ENCODE measurements at regions of chr1 and their contacts with region 1.

Region 1: DNA sequence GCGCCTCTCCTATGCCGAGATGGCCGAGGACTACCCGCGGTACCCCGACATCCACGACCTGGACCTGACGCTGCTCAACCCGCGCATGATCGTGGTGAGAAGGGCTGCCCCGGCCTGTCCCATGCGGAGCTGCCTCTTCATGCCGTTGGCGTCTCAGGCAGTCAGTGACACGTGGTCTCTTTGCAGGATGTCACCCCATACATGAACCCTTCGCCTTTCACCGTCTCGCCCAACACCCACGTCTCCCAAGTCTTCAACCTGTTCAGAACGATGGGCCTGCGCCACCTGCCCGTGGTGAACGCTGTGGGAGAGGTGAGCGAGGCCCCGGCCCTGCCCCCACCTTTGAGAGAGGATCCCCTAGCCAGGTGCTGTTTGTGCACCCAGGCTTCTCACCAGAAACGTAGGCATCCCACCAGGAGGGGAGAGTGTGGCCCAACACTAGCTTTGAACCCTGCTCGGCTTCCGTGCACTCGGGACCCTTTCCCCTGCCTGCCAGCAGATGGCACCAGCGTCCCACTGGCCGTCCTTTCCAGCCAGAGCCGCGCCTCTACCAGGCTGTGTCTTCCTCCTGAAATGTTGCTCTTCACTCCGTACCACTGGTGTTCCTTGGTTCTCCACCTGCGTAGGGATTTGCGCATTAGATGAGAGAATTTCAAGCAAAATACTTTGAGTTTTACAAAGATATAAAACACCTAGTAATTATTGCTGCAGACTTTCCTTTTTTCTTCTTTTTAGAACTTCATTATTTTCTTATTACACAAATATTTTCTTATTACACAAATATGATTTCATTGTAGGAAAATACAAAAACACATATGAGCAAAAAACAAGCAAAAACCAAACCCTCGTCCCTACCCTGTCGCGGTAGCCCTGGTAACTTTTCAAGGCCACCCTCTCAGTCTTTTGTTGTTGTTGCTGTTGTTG is 9.0 kb downstream of the NPPA start:
- DNase-seq: peak; percentile 93
- H3K4me3 ChIP-seq: peak overlapping the region in 1 of 2 experiments; percentile 36; a peak in 1 of 4 replicates
- H3K27ac ChIP-seq: no peak overlapping the region; a peak in 1 of 4 replicates
- H3K4me1 ChIP-seq: peaks cover 0 to 26% of the 10 kb centered on the region in 2 experiments; a peak in 2 of 4 replicates
- H3K27me3 ChIP-seq: no peaks in the 10 kb centered on the region
- CTCF ChIP-seq: peak; percentile 97
- EP300 ChIP-seq: no peak
- RAD21 ChIP-seq: peak; percentile 99

Region 2: DNA sequence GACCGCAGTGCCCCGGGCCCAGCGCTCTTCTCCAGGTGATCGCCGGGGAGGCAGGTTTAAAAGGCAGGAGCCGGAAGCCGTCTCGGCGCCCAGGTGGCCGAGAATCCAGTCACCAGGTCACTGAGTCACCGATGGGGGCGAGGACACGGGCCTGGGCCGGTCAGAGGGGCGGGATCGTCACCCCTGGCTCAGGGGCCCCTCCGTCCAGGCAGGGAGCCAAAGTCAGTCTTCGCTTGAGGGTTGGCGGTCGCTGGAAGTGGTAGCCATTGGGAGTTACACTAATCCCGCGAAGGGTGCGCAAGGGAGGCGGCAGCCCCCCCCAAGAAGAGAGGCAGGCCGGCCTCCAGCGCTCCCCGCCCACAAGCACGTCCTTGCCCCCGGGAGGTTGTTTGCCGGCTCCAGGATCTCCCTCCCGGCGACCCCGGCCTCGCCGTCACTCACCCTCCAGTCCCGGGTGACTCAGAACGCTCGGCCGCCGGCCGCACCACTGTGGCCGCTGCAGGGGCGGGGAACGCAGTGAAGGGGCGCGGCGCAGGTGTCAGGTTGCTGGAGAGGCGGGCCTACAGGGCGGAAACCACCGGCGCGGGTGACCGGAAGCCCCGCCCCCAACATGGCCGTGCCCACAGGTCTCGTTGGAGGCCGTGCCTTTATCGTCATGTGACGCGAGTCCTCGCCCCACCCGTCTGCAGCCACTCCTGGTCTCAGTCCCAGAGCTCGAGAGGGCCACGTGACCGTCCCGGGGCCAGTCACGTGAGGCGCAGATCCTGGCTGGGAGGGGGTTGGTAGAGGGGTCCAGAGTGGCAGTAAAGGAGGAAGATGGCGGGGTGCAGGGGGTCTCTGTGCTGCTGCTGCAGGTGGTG is 32.9 kb before region 1 on chr1 and contains the starts of genes CLCN6 and MTHFR:
- CTCF ChIA-PET with region 1: interaction called, 10 read pairs
- POLR2A ChIA-PET with region 1: no interaction called
- DNase-seq: peak; percentile 99
- H3K4me3 ChIP-seq: peak within 1 kb of the TSS; percentile 87 to 96
- H3K27ac ChIP-seq: peak within 1 kb of the TSS; percentile 79 to 91
- H3K4me1 ChIP-seq: peaks cover 34 to 35% of the 10 kb centered on the region in 2 experiments; a peak in 3 of 4 replicates
- H3K27me3 ChIP-seq: no peaks in the 10 kb centered on the region
- CTCF ChIP-seq: no peak
- EP300 ChIP-seq: no peak
- RAD21 ChIP-seq: no peak
- polyA plus RNA-seq, gene CLCN6: 7.4 and 8.3 TPM in 2 replicates
- polyA plus RNA-seq, gene MTHFR: 5.3 and 7.6 TPM in 2 replicates

Region 3: GRCh38 chr1:11828511-11828910 is 10.1 kb before region 1 on chr1:
- CTCF ChIA-PET with region 1: interaction called, 29 read pairs
- POLR2A ChIA-PET with region 1: no interaction called
- DNase-seq: no peak
- H3K4me3 ChIP-seq: no peak overlapping the region
- H3K27ac ChIP-seq: no peak overlapping the region
- H3K4me1 ChIP-seq: no peaks in the 10 kb centered on the region
- H3K27me3 ChIP-seq: no peaks in the 10 kb centered on the region
- CTCF ChIP-seq: no peak
- EP300 ChIP-seq: no peak
- RAD21 ChIP-seq: no peak

Region 4: GRCh38 chr1:11882814-11883538 is 44.4 kb after region 1 on chr1:
- CTCF ChIA-PET with region 1: interaction called, 48 read pairs
- POLR2A ChIA-PET with region 1: interaction called, 4 read pairs
- DNase-seq: peak; percentile 78
- H3K4me3 ChIP-seq: no peak overlapping the region
- H3K27ac ChIP-seq: peak overlapping the region in 1 of 2 experiments; percentile 99; a peak in 2 of 4 replicates
- H3K4me1 ChIP-seq: peaks cover 0 to 57% of the 10 kb centered on the region in 2 experiments; a peak in 2 of 4 replicates
- H3K27me3 ChIP-seq: no peaks in the 10 kb centered on the region
- CTCF ChIP-seq: no peak
- EP300 ChIP-seq: peak in 1 of 2 experiments; percentile 51; a peak in 2 of 4 replicates
- RAD21 ChIP-seq: no peak

Region 5: GRCh38 chr1:11967028-11967547 is 128.5 kb after region 1 on chr1:
- CTCF ChIA-PET with region 1: interaction called, 14 read pairs
- POLR2A ChIA-PET with region 1: no interaction called
- DNase-seq: peak; percentile 69
- H3K4me3 ChIP-seq: no peak overlapping the region
- H3K27ac ChIP-seq: no peak overlapping the region
- H3K4me1 ChIP-seq: no peaks in the 10 kb centered on the region
- H3K27me3 ChIP-seq: no peaks in the 10 kb centered on the region
- CTCF ChIP-seq: peak; percentile 36
- EP300 ChIP-seq: no peak
- RAD21 ChIP-seq: peak; percentile 80

Region 6: GRCh38 chr1:12191242-12192032 is 352.8 kb after region 1 on chr1:
- CTCF ChIA-PET with region 1: no interaction called
- POLR2A ChIA-PET with region 1: no interaction called
- DNase-seq: no peak
- H3K4me3 ChIP-seq: no peak overlapping the region
- H3K27ac ChIP-seq: no peak overlapping the region
- H3K4me1 ChIP-seq: peaks cover 0 to 6% of the 10 kb centered on the region in 2 experiments; a peak in 1 of 4 replicates
- H3K27me3 ChIP-seq: no peaks in the 10 kb centered on the region
- CTCF ChIP-seq: no peak
- EP300 ChIP-seq: no peak
- RAD21 ChIP-seq: no peak